CD4-positive, alpha-beta T cell (primary cell): ENCODE measurements at regions of chr13 and their contacts with region 1.

Region 1: GRCh38 chr13:102580552-102581169 is 16.1 kb upstream of the TPP2 start:
- DNase-seq: peak in 6 of 14 experiments; percentile 11 to 83 (median 64)
- ATAC-seq: peak; percentile 85
- H3K4me3 ChIP-seq: no peak overlapping the region
- H3K4me3 Mint-ChIP-seq: no peak overlapping the region
- H3K27ac ChIP-seq: no peak overlapping the region
- H3K27ac Mint-ChIP-seq: no peak overlapping the region
- H3K4me1 ChIP-seq: peaks cover 4% of the 10 kb centered on the region
- H3K4me1 Mint-ChIP-seq: peaks cover 8% of the 10 kb centered on the region
- H3K27me3 ChIP-seq: no peaks in the 10 kb centered on the region
- H3K27me3 Mint-ChIP-seq: peaks cover 4% of the 10 kb centered on the region
- CTCF ChIP-seq: peak; percentile 88

Region 2: DNA sequence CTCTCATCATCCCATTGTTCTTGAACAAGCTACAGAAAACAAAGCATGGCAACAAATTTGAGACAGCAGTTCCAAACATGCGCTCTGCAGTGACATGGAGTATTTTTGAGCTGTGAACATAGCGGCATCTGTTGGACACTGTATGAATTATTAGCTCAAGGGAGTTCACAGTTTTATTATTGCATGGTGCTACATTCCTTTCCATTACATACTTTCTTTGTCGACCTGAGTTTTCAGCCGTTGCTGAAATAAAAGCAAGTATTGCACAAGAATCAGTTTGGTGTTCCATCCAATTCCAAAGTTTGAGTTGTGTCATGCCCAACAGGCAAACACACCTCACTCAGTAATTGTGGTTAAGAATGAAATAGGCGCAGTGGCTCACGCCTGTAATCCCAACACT is 144.3 kb after region 1 on chr13:
- CTCF ChIA-PET with region 1: interaction called, 3 read pairs
- POLR2A ChIA-PET with region 1: no interaction called
- intact Hi-C with region 1: loop called in 1 of 2 experiments (anchors 2 kb)
- DNase-seq: peak in 4 of 14 experiments; percentile 6 to 21 (median 16)
- ATAC-seq: no peak
- H3K4me3 ChIP-seq: no peak overlapping the region
- H3K4me3 Mint-ChIP-seq: no peak overlapping the region
- H3K27ac ChIP-seq: no peak overlapping the region
- H3K27ac Mint-ChIP-seq: no peak overlapping the region
- H3K4me1 ChIP-seq: no peaks in the 10 kb centered on the region
- H3K4me1 Mint-ChIP-seq: no peaks in the 10 kb centered on the region
- H3K27me3 ChIP-seq: no peaks in the 10 kb centered on the region
- H3K27me3 Mint-ChIP-seq: peaks cover 4% of the 10 kb centered on the region
- CTCF ChIP-seq: no peak

Region 3: DNA sequence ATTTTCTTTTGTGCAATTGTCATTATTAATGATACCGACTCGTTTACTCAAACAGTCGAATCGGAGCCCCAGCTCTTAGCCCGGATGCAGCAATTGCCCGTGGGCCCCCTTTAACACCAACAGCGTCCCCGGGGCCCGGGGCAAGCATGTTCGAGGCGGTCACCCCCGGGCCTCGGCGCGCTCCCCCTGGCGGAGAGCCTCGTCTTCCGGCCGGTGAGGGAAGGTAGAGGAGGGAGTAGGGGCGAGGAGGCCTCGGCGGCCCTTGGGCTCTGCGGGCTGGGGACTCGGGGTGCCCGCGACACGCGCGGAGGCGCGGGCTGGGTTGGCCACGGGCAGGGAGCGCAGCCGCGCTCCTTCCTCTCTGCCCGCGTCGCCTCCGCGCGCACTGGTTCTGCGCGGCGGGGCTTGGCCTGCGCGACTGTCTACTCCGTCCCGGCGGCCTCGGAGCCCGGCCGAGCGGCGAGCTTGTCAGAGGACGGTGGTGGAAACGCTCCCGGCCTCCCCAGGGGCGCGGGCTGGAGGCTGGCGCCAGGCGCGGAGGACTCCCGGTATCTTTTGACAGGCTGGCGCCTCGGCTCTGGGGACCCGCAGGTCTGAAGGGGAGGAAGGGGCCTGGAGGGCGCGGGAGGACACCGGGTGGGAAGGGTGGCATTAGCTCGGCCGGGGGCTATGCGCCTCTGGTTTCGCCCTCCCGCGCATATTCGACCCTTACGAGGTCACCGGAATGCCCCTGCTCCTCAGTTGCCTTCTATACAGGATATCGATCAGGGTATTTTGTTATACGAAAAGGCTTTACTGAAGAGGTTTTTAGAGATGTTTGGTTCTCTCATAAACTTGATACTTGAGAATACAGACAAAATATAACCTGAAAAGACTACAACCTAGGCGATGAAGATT is 219.7 kb after region 1 on chr13:
- CTCF ChIA-PET with region 1: no interaction called
- POLR2A ChIA-PET with region 1: no interaction called
- intact Hi-C with region 1: loop called in 1 of 2 experiments (anchors 2 kb)
- DNase-seq: peak; percentile 58 to 90 (median 75)
- ATAC-seq: peak; percentile 76
- H3K4me3 ChIP-seq: peak overlapping the region; percentile 77
- H3K4me3 Mint-ChIP-seq: peak overlapping the region; percentile 94
- H3K27ac ChIP-seq: no peak overlapping the region
- H3K27ac Mint-ChIP-seq: peak overlapping the region; percentile 66
- H3K4me1 ChIP-seq: peaks cover 31% of the 10 kb centered on the region
- H3K4me1 Mint-ChIP-seq: peaks cover 29% of the 10 kb centered on the region
- H3K27me3 ChIP-seq: peaks cover 6 to 18% of the 10 kb centered on the region in 2 experiments
- H3K27me3 Mint-ChIP-seq: peaks cover 28% of the 10 kb centered on the region
- CTCF ChIP-seq: peak; percentile 69